Psoas muscle (tissue), 8 donors: ENCODE measurements at regions of chr9 and their contacts with region 1.

Region 1: GRCh38 chr9:106921341-106921899 is 58.5 kb downstream of the ZNF462 start:
- DNase-seq: no peak
- ATAC-seq: peak; percentile 49 to 71 (median 67)
- H3K4me3 ChIP-seq: peak overlapping the region; percentile 56
- H3K27ac ChIP-seq: peak overlapping the region; percentile 92
- H3K4me1 ChIP-seq: peaks cover 49% of the 10 kb centered on the region
- H3K27me3 ChIP-seq: no peaks in the 10 kb centered on the region
- CTCF ChIP-seq: no peak

Region 2: GRCh38 chr9:106878924-106879323 is 42.5 kb before region 1 on chr9:
- intact Hi-C with region 1: loop called in 1 of 2 experiments (anchors 5 kb)
- DNase-seq: peak; percentile 74 to 76
- ATAC-seq: peak; percentile 74 to 87 (median 82)
- H3K4me3 ChIP-seq: no peak overlapping the region
- H3K27ac ChIP-seq: peak overlapping the region; percentile 74
- H3K4me1 ChIP-seq: peaks cover 98% of the 10 kb centered on the region
- H3K27me3 ChIP-seq: no peaks in the 10 kb centered on the region
- CTCF ChIP-seq: no peak

Region 3: DNA sequence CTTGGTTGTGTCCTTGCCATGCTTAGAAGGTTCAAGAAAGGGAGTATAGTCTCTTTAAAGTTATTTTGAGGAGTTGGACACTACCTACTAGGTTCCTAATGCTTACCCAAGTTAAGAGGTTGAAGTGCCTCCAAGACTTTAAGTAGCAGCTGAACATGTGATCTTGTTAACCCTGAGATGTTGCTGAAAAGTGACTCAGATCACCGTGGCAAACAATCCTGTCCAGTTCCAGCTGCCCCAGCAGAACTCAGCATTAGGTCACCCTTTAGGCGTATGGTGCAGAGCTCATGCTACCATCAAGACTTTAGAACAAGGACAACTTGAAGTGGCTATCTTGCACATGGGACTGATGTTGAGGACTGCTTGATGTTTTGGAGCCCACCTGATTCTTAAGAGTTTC is 36.0 kb before region 1 on chr9:
- intact Hi-C with region 1: loop called in 1 of 2 experiments (anchors 5 kb)
- DNase-seq: peak in 1 of 2 donors; percentile 58
- ATAC-seq: peak; percentile 86 to 93 (median 88)
- H3K4me3 ChIP-seq: peak overlapping the region; percentile 56
- H3K27ac ChIP-seq: peak overlapping the region; percentile 89
- H3K4me1 ChIP-seq: peaks cover 78% of the 10 kb centered on the region
- H3K27me3 ChIP-seq: no peaks in the 10 kb centered on the region
- CTCF ChIP-seq: no peak